ENCODE measurements at regions of chr9 and their contacts with region 1.

Region 1: GRCh38 chr9:76658535-76659231 is 105.6 kb upstream of the PCA3 start:
- DNase-seq: no peak
- H3K4me3 Mint-ChIP-seq: no peak overlapping the region
- H3K27ac Mint-ChIP-seq: no peak overlapping the region
- H3K4me1 Mint-ChIP-seq: peaks cover 44% of the 10 kb centered on the region
- H3K27me3 Mint-ChIP-seq: peaks cover 2% of the 10 kb centered on the region

Region 2: GRCh38 chr9:76403352-76403751 is 255.3 kb before region 1 on chr9:
- intact Hi-C with region 1: loop called (anchors 1 kb)
- DNase-seq: peak; percentile 15
- H3K4me3 Mint-ChIP-seq: peak overlapping the region; percentile 58
- H3K27ac Mint-ChIP-seq: peak overlapping the region; percentile 76
- H3K4me1 Mint-ChIP-seq: peaks cover 22% of the 10 kb centered on the region
- H3K27me3 Mint-ChIP-seq: no peaks in the 10 kb centered on the region

Region 3: DNA sequence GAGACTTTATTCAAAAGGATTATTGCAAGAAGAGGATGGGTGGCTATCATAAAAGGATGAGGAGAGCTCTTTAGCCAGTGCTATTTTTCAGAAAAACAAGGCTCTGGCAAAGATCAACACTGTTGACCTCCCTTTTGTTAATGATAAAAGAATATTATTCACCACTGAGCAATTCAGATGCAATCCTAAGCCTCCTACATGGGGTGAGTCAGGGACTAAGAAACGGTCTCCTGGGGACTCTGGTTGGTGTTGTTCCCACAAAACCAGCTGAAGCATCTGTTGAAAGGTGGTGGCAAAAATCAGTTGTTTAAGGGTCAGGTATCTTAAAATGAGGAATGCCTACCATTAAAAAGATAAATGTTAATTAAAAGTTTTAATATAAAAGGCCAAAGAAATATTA is 207.4 kb before region 1 on chr9:
- intact Hi-C with region 1: loop called (anchors 1 kb)
- DNase-seq: no peak
- H3K4me3 Mint-ChIP-seq: no peak overlapping the region
- H3K27ac Mint-ChIP-seq: no peak overlapping the region
- H3K4me1 Mint-ChIP-seq: peaks cover 37% of the 10 kb centered on the region
- H3K27me3 Mint-ChIP-seq: no peaks in the 10 kb centered on the region

Region 4: DNA sequence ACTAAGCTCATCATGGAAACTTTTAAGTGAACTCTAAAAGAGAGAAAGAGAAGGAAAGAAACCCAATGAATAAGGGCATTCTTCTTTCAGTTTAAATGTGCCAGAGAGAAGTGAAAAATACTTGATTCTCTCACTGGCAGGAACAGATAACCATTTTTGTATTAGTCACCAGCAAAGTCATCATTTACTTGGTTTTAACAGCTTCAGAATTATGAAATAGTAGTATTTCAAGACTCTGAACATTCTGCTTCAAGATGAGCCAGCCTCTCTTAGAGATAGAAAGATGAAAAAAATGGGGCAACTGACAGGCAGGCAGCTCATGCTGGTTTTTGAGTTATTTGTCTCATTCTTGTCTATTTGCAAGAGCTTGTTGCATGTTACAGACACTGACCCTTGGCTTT is 96.2 kb before region 1 on chr9:
- intact Hi-C with region 1: loop called (anchors 1 kb)
- DNase-seq: no peak
- H3K4me3 Mint-ChIP-seq: no peak overlapping the region
- H3K27ac Mint-ChIP-seq: peak overlapping the region; percentile 43
- H3K4me1 Mint-ChIP-seq: peaks cover 23% of the 10 kb centered on the region
- H3K27me3 Mint-ChIP-seq: peaks cover 4% of the 10 kb centered on the region

Region 5: GRCh38 chr9:76624391-76625048 is 34.2 kb before region 1 on chr9:
- intact Hi-C with region 1: no loop called
- DNase-seq: no peak
- H3K4me3 Mint-ChIP-seq: no peak overlapping the region
- H3K27ac Mint-ChIP-seq: no peak overlapping the region
- H3K4me1 Mint-ChIP-seq: peaks cover 10% of the 10 kb centered on the region
- H3K27me3 Mint-ChIP-seq: peaks cover 26% of the 10 kb centered on the region

Region 6: GRCh38 chr9:76704593-76705204 is 46.0 kb after region 1 on chr9:
- intact Hi-C with region 1: loop called (anchors 5 kb)
- DNase-seq: no peak
- H3K4me3 Mint-ChIP-seq: no peak overlapping the region
- H3K27ac Mint-ChIP-seq: no peak overlapping the region
- H3K4me1 Mint-ChIP-seq: peaks cover 7% of the 10 kb centered on the region
- H3K27me3 Mint-ChIP-seq: peaks cover 26% of the 10 kb centered on the region

Measured in activated T-helper 2 cell treated with anti-CD3 and anti-CD28 coated beads, Interferon-gamma antibody, Interleukin-2, Interleukin-4, amounts not matched to agents 10 μg/mL and 5 μg/mL and 100 μg/mL, durations not matched to agents 14 hours and 24 hours and 36 hours (primary cell).